Transverse colon (tissue), 4 donors: ENCODE measurements at regions of chr15 and their contacts with region 1.

Region 1: DNA sequence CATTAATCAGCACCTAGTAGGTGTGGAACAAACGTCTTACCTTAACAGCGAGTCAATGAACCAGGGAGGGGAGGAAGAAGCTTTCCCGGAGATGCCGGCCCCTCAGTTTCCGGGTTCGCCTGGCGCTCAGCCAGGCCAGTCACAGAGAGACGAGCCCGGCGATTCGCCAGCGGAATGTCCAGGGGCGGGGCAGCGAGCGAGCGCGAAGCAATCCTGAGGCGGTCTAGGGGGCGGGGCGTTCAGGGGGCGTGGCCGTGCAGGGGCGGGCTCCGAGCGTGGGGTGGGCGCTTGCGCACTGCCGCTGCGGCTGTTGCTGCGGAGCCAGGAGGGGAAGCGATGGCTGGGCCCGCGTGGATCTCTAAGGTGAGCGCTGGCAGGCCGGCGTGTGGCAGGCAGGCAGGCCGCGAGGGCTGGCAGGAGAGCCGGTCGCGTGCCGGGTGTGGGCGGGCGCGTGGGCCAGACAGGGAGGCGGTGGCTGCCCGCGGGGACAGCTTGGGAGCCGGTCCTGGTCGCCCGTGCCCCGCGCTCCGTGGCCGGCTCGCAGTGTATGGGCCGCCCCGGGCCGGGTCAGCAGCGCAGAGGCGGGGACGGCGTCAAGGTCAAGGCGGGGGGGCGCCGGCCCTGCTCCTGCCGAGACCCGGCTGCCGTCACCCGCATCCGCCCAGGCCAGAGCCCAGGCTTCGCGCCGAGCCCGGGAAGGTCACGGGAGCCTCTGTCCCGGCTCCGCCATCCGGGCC is at the start of gene IDH3A:
- DNase-seq: peak; percentile 100
- H3K4me3 ChIP-seq: peak within 1 kb of the TSS; percentile 50 to 95 (median 76)
- H3K27ac ChIP-seq: peak within 1 kb of the TSS; percentile 87 to 95 (median 90)
- H3K4me1 ChIP-seq: peaks cover 11 to 37% (median 23%) of the 10 kb centered on the region in 4 donors
- H3K27me3 ChIP-seq: no peaks in the 10 kb centered on the region
- CTCF ChIP-seq: no peak
- EP300 ChIP-seq: no peak
- POLR2A ChIP-seq: peak; percentile 85
- total RNA-seq, gene IDH3A: 149 to 369 (median 166) TPM

Region 2: GRCh38 chr15:78437762-78438302 is 288.6 kb after region 1 on chr15 and contains the start of gene IREB2:
- in situ Hi-C with region 1: loop called in 1 of 4 experiments (anchors 25 kb)
- intact Hi-C with region 1: no loop called
- DNase-seq: peak; percentile 98
- H3K4me3 ChIP-seq: peak within 1 kb of the TSS; percentile 75 to 99 (median 91)
- H3K27ac ChIP-seq: peak within 1 kb of the TSS; percentile 91 to 100 (median 97)
- H3K4me1 ChIP-seq: peaks cover 16 to 55% (median 31%) of the 10 kb centered on the region in 4 donors
- H3K27me3 ChIP-seq: no peaks in the 10 kb centered on the region
- CTCF ChIP-seq: no peak
- EP300 ChIP-seq: no peak
- POLR2A ChIP-seq: peak; percentile 76
- total RNA-seq, gene IREB2: 20.1 to 71.7 (median 40.7) TPM